Tibial artery (tissue), 4 donors: ENCODE measurements at regions of chr18 and their contacts with region 1.

Region 1: GRCh38 chr18:864872-865273 is 39.8 kb upstream of the ADCYAP1 start:
- DNase-seq: peak; percentile 60 to 78
- H3K4me3 ChIP-seq: no peak overlapping the region
- H3K27ac ChIP-seq: no peak overlapping the region
- H3K4me1 ChIP-seq: no peaks in the 10 kb centered on the region
- H3K27me3 ChIP-seq: no peaks in the 10 kb centered on the region
- CTCF ChIP-seq: peak; percentile 94 to 99

Region 2: GRCh38 chr18:961644-962355 is 96.9 kb after region 1 on chr18:
- intact Hi-C with region 1: loop called (anchors 5 kb)
- DNase-seq: no peak
- H3K4me3 ChIP-seq: peak overlapping the region; percentile 49 to 50
- H3K27ac ChIP-seq: peak overlapping the region; percentile 62 to 73
- H3K4me1 ChIP-seq: peaks cover 0 to 9% (median 4%) of the 10 kb centered on the region in 4 donors
- H3K27me3 ChIP-seq: no peaks in the 10 kb centered on the region
- CTCF ChIP-seq: peak; percentile 80 to 90

Region 3: DNA sequence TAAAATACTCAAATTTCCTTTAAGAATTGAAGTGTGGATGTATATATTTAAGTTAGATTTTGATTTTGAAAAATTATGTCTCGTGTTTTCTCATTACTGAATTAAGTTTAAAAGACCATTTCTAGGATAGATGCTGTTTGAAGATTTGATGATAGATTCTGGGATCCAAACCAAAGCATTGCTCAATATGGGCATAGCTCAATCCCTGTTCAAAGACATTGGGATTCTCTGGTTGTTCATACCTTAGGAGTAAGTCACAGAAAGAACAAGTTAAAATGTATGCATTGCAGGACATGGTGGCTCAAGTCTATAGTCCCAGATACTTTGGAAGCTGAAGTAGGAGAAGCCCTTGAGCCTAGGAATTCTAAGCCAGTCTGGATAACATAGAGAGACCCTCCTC is 662.1 kb after region 1 on chr18:
- intact Hi-C with region 1: no loop called
- DNase-seq: no peak
- H3K4me3 ChIP-seq: no peak overlapping the region
- H3K27ac ChIP-seq: no peak overlapping the region
- H3K4me1 ChIP-seq: no peaks in the 10 kb centered on the region
- H3K27me3 ChIP-seq: no peaks in the 10 kb centered on the region
- CTCF ChIP-seq: no peak